Activated T-helper 1 cell treated with anti-CD3 and anti-CD28 coated beads, Interleukin-12 subunit alpha, Interleukin-12 subunit beta, Interleukin-2, Interleukin-4 antibody, amounts not matched to agents 30 ng/mL and 10 ng/mL and 1 ng/mL, durations not matched to agents 14 hours and 24 hours and 36 hours (primary cell): ENCODE measurements at regions of chr1 and their contacts with region 1.

Region 1: DNA sequence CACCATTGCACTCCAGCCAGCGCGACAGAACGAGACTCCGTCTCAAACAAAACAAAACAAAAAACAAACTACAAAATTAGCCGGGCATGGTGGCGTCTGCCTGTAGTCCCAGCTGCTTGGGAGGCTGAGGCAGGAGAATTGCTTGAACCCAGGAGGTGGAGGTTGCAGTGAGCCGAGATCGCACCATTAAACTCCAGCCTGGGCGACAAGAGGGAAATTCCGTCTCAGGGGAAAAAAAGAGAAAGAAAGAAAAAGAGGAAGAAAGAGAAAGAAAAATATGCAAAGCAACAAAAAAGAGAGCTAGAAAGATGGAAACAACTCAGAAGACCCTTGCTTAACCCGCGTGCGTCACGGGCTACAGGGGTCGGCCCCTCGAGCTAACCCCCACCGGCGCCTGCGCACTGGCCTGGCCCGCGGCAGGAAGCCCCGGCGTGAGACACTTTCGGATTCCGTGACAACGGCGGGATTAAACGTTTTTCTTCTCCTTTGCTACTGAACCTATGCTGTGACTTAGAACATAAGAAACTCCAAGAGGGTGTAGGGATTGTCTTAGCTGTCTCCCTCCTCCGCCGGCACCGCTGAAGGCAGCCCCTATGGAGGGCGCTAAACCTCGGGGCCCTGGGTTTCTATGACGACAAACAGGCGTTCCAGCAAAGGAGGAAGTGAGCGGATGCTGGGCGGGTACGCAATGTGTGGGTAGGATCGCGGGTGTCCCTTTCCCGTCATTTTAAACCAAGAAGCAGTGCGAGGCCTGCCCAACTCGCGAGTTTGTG is at the start of gene AXDND1:
- DNase-seq: peak; percentile 87
- H3K4me3 Mint-ChIP-seq: peak within 1 kb of the TSS; percentile 95
- H3K27ac Mint-ChIP-seq: peak within 1 kb of the TSS; percentile 100
- H3K4me1 Mint-ChIP-seq: peaks cover 12% of the 10 kb centered on the region
- H3K27me3 Mint-ChIP-seq: no peaks in the 10 kb centered on the region
- total RNA-seq, gene AXDND1: not detected in 2 replicates

Region 2: DNA sequence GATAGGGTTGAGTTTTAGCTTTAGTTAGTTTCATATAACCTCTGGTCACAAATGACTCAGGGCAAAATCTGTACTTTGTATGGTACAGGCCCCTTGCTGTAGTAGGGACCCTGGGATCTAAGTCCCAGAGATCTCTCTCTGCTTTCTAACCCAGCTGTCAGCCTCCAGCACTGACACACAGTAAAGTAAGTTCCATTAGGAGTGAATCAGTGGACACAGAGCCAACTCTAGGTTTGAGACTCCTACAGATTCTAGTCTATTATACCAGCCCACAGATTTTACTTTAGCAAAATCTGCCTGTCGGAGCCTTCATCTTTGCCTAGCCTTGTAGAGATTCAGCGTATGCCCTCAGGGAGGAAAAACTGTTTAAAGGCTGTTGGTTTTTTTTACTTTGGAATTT is 547.1 kb before region 1 on chr1:
- intact Hi-C with region 1: no loop called
- DNase-seq: no peak
- H3K4me3 Mint-ChIP-seq: no peak overlapping the region
- H3K27ac Mint-ChIP-seq: no peak overlapping the region
- H3K4me1 Mint-ChIP-seq: no peaks in the 10 kb centered on the region
- H3K27me3 Mint-ChIP-seq: no peaks in the 10 kb centered on the region

Region 3: DNA sequence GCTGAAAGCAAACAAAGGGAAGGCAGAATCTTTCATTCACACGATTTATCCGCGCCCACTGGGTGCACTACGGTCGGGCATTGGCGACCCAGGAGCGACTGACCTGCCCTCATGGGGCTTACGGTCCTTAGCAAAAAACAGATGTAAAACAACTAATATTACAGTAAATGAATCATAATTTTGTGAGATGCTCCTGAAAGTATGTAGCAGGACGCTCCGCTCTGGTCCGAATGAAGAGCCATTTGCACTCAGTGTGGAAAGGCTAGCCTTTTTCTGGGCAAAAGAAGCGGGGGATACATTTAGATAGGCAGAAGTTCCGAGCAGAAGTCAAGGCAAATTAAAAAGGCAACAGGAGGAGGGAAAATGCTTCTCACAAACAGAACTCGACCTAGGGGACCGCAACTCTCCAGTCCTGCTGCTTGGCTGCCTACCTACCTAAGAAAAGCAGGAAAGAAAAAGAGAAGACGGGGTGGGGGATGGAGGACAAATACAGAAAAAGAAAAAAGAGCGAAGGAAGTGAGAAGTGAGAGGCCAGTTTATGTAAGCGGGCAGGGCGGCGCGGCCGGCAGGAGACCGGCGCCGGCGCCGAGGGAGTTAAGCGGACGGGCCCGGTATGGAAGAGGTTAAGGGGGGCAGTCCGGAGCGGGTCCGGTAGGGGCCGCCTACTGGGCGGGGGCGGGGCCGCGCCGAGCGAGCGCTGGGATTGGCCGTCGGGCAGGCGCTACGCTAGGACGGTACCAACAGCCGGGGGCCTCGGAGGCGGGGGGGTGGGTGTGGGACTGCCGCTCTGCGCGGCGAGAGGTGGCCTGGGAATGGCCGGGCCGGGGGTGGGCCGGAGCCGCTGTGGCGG is 340.2 kb before region 1 on chr1 and contains the start of gene FAM20B:
- intact Hi-C with region 1: loop called (anchors 1 kb)
- DNase-seq: peak; percentile 86
- H3K4me3 Mint-ChIP-seq: peak within 1 kb of the TSS; percentile 89
- H3K27ac Mint-ChIP-seq: peak within 1 kb of the TSS; percentile 82
- H3K4me1 Mint-ChIP-seq: peaks cover 43% of the 10 kb centered on the region
- H3K27me3 Mint-ChIP-seq: peaks cover 18% of the 10 kb centered on the region
- total RNA-seq, gene FAM20B: 36.6 and 39.2 TPM in 2 replicates

Region 4: GRCh38 chr1:179121159-179121938 is 244.2 kb before region 1 on chr1:
- intact Hi-C with region 1: loop called (anchors 1 kb)
- DNase-seq: peak; percentile 13
- H3K4me3 Mint-ChIP-seq: no peak overlapping the region
- H3K27ac Mint-ChIP-seq: no peak overlapping the region
- H3K4me1 Mint-ChIP-seq: peaks cover 9% of the 10 kb centered on the region
- H3K27me3 Mint-ChIP-seq: no peaks in the 10 kb centered on the region

Region 5: GRCh38 chr1:179190861-179191260 is 174.6 kb before region 1 on chr1:
- intact Hi-C with region 1: loop called (anchors 2 kb)
- DNase-seq: no peak
- H3K4me3 Mint-ChIP-seq: no peak overlapping the region
- H3K27ac Mint-ChIP-seq: peak overlapping the region; percentile 44
- H3K4me1 Mint-ChIP-seq: peaks cover 18% of the 10 kb centered on the region
- H3K27me3 Mint-ChIP-seq: no peaks in the 10 kb centered on the region

Region 6: DNA sequence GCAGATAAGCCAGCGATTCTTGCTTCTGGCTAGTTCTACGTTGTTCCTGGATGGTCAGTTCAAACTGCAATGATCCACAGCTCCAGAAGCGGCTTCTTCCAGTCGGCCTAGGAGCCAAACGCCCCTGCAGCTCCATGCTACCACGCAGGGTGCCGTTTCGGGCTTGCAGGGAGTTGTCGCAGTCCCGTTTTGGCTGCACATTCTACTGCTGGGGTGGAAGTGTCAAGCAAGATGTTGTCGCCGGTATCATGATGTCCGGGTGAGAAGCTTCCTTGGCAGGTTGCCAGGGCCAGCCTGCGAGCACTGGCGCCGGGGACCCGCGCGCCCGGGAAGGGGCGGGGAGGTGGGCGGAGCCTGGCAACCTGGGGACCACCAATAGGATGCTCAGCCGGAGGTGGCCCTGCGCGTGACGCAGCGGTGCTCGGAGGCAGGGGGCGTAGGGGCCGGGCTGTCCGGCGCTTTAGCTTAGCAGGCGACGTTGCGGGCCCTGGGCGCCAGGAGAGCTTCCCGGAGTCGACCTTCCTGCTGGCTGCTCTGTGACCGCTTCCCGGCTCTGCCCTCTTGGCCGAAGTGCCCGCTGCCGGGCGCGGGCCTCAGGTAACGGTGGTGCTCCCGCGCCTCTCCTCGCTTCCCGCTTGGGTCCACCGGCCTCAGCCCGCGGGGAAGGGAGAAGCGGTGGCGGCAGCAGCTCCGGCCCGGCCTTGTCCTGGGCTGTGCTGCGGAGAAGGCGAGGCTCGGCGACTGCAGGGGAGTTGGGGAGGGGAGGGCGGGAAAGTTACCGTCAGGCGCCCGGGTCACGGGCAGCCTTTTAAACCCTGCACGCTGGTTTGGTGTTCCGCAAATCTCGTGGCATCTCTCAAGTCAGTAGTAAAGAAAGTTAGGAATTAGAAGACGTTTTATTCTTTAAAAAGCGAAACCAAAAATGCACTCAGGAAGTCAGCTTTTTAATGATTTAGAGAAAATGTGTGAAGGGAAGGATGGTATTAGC is 71.9 kb before region 1 on chr1 and contains the start of gene SOAT1:
- intact Hi-C with region 1: loop called (anchors 1 kb)
- DNase-seq: peak; percentile 88
- H3K4me3 Mint-ChIP-seq: peak within 1 kb of the TSS; percentile 99
- H3K27ac Mint-ChIP-seq: peak within 1 kb of the TSS; percentile 96
- H3K4me1 Mint-ChIP-seq: peaks cover 41% of the 10 kb centered on the region
- H3K27me3 Mint-ChIP-seq: no peaks in the 10 kb centered on the region
- total RNA-seq, gene SOAT1: 48.7 and 49.0 TPM in 2 replicates

Region 7: GRCh38 chr1:179327679-179328078 is 37.8 kb before region 1 on chr1:
- intact Hi-C with region 1: no loop called
- DNase-seq: no peak
- H3K4me3 Mint-ChIP-seq: no peak overlapping the region
- H3K27ac Mint-ChIP-seq: no peak overlapping the region
- H3K4me1 Mint-ChIP-seq: peaks cover under 1% of the 10 kb centered on the region
- H3K27me3 Mint-ChIP-seq: no peaks in the 10 kb centered on the region

Region 8: GRCh38 chr1:179882243-179883039 is 516.9 kb after region 1 on chr1 and contains the start of gene TOR1AIP1:
- intact Hi-C with region 1: loop called (anchors 5 kb)
- DNase-seq: peak; percentile 98
- H3K4me3 Mint-ChIP-seq: peak within 1 kb of the TSS; percentile 95
- H3K27ac Mint-ChIP-seq: peak within 1 kb of the TSS; percentile 100
- H3K4me1 Mint-ChIP-seq: peaks cover 55% of the 10 kb centered on the region
- H3K27me3 Mint-ChIP-seq: no peaks in the 10 kb centered on the region
- total RNA-seq, gene TOR1AIP1: 76.1 and 80.5 TPM in 2 replicates